AG04449 (cell line): ENCODE measurements at regions of chr15 and their contacts with region 1.

Region 1: DNA sequence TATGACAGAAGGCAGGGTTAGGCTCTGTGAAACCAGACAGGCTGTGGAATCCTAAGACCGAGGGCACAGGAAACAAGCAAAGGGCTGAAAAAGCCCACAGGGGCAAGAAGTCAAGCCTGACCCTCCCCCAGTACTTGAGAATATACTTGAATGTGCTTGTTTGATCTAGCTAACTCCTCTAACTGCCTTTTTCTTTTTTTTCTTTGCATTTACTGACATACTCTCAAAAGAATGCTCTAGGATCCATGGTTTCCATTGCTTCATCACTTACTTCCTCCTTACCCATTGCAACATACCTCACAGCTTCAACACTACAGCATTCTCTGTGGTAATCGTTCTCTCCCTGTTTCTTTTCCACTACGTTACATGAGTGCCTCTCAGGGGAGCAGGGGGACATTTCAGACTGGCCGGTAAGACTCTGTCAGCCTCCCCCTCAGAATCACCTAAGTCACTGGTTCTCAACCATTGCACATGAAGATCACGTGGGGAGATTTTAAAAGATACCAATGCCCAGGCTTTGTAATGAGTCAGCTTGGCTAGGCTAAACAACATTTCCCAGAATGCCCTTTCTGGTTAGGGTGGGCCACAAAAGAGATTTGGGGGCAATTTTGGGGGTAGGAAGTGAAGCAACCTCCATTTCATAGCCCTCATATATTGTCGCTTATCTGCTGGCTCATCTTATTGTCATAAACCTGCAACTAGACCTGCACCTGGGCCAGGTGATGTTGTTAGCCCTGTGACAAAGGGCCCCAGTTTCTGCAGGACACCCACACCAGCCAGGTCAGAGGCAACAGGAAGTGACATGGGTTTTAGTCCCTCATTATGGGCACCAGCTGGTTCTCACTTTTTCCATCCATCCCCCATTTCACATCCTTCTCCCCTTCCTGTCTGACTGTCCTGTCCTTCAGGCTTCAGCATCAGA is 24.6 kb upstream of the RSL24D1 start:
- DNase-seq: peak; percentile 86
- H3K4me3 ChIP-seq: no peak overlapping the region
- CTCF ChIP-seq: no peak

Region 2: GRCh38 chr15:55196458-55197361 is 24.6 kb before region 1 on chr15 and contains the start of gene RSL24D1:
- CTCF ChIA-PET with region 1: interaction called, 18 read pairs
- POLR2A ChIA-PET with region 1: interaction called, 5 read pairs
- DNase-seq: peak; percentile 91
- H3K4me3 ChIP-seq: peak within 1 kb of the TSS; percentile 90
- CTCF ChIP-seq: peak; percentile 48

Region 3: GRCh38 chr15:55282284-55282833 is 61.0 kb after region 1 on chr15:
- CTCF ChIA-PET with region 1: interaction called, 12 read pairs
- POLR2A ChIA-PET with region 1: interaction called, 4 read pairs
- DNase-seq: no peak
- H3K4me3 ChIP-seq: no peak overlapping the region
- CTCF ChIP-seq: no peak

Region 4: GRCh38 chr15:55290528-55291057 is 69.2 kb after region 1 on chr15:
- CTCF ChIA-PET with region 1: interaction called, 170 read pairs
- POLR2A ChIA-PET with region 1: no interaction called
- DNase-seq: no peak
- H3K4me3 ChIP-seq: peak overlapping the region; percentile 79
- CTCF ChIP-seq: peak; percentile 91

Region 5: DNA sequence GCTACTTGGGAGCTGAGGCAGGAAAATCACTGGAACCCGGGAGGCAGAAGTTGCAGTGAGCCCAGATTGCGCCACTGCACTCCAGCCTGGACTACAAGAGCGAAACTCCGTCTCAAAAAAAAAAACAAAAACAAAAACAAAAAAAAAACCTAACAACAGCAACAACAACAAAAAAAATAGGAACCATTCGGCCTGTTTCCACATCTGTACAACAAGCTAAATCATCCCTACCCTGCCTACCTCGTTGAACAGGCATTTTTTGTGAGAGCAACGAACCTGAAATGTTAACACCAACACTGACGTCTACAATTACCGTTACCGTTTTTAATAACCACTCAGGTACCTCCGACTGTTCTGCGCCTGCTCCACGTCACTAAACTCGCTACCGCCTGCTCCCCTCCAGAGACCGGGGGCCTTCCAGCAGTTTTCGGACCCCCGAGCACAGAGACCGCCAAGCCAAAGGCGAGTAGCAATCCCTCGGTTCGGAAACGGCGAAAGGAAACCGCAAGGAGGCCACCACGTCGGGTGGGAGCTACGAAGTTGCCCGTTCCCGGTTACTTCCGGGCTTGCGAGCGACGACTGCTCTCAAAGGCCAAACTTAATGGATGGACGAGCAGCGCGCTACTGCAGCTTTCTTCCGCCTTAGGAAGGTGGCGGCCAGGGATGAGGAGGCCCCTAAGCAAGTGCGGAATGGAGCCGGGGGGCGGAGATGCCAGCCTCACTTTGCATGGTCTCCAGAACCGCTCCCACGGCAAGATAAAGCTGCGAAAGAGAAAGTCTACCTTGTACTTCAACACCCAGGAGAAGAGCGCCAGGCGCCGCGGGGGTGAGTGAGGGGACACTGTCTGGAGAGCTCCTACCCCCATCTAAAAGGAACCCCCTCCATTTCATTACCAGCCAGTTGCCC is 97.5 kb after region 1 on chr15 and contains the starts of genes PIGB and PIGBOS1:
- CTCF ChIA-PET with region 1: interaction called, 14 read pairs
- POLR2A ChIA-PET with region 1: no interaction called
- DNase-seq: peak; percentile 45
- H3K4me3 ChIP-seq: peak within 1 kb of the TSS; percentile 93
- CTCF ChIP-seq: no peak